H1 (cell line): ENCODE measurements at regions of chr19 and their contacts with region 1.

Region 1: DNA sequence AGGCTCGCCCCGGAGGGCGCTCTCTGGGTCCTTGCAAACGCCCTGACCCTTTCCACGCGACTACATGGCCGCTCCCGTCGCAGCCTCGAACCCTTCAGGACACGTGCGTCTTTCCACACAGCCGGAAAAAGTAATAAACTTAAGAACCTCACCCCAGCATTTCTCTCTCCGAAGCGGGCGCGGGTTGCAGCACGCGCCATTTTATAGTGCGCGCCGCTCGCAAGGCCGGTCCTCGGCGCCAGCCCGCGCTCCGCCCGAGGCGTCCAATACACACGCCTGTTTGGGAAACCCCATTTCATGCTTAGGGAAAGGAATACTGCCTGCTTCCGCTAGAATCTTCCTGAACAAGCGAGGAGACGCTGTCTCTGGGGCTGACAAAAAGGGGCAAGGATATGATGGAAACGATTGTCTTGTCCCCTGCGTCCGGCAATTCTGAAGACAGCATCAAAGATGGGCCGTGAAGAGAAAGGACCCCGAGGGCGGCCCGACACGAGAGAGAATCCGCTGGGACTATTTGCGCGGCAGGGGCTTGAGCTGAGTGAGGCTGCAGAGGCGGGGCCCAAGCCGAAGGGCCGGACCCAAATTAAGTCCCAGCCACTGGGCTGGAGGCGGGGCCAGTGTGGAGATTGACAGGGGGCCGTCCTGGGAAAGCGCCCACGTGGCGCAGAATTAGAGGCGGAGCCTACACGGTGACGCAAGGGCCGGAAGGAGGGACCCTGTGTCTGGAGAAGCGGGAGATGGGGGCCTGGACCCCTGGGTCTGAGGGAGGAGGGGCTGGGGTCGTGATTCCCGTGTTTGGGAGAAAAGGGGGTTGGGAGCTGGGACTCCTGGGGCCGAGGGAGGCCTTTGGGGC is 14.4 kb downstream of the ACP4 start:
- DNase-seq: peak; percentile 96 to 98
- H3K4me3 ChIP-seq: peak overlapping the region; percentile 88 to 99 (median 97)
- H3K27ac ChIP-seq: peak overlapping the region; percentile 100
- H3K4me1 ChIP-seq: peaks cover 0 to 11% (median 5%) of the 10 kb centered on the region in 4 experiments; a peak in 5 of 7 replicates
- H3K27me3 ChIP-seq: peaks cover 0 to 4% (median 3%) of the 10 kb centered on the region in 4 experiments; a peak in 3 of 7 replicates
- CTCF ChIP-seq: no peak
- EP300 ChIP-seq: no peak; a peak in 1 of 3 replicates
- POLR2A ChIP-seq: peak; percentile 98 to 99
- RAD21 ChIP-seq: peak in 1 of 2 experiments; percentile 0; a peak in 1 of 4 replicates

Region 2: GRCh38 chr19:50669302-50670101 is 135.1 kb before region 1 on chr19:
- CTCF ChIA-PET with region 1: no interaction called
- POLR2A ChIA-PET with region 1: no interaction called
- DNase-seq: peak in 1 of 2 experiments; percentile 67
- H3K4me3 ChIP-seq: no peak overlapping the region
- H3K27ac ChIP-seq: no peak overlapping the region
- H3K4me1 ChIP-seq: peaks cover 0 to 8% (median 4%) of the 10 kb centered on the region in 4 experiments; a peak in 5 of 7 replicates
- H3K27me3 ChIP-seq: peaks cover 27 to 46% (median 42%) of the 10 kb centered on the region in 4 experiments
- CTCF ChIP-seq: peak; percentile 58 to 83 (median 68)
- EP300 ChIP-seq: no peak
- POLR2A ChIP-seq: no peak
- RAD21 ChIP-seq: peak; percentile 45 to 49

Region 3: DNA sequence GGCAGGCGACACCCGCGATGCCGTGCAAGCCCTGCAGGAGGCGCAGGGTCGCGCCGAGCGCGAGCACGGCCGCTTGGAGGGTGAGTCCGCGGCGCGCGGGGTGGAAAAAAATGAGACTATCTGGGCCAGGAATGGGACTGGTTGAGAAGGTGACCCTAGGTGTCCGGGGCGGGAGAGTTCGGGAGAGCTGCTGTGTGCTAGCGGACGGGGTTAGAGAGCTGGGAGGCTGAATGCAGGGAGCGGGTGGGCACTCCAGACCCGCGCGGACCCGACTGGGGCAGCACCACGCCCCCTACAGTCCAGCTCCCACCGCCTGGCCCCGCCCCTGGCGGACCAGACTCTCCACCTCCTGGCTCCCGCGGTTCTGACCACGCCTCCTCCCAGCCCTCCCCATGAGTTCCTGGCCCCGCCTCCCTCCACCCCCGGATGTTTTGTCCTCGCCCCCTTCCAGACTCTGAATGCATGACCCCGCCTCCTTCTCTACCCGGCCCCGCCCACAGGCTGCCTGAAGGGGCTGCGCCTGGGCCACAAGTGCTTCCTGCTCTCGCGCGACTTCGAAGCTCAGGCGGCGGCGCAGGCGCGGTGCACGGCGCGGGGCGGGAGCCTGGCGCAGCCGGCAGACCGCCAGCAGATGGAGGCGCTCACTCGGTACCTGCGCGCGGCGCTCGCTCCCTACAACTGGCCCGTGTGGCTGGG is 80.0 kb before region 1 on chr19:
- CTCF ChIA-PET with region 1: interaction called, 8 read pairs
- POLR2A ChIA-PET with region 1: interaction called, 10 read pairs
- DNase-seq: peak; percentile 99
- H3K4me3 ChIP-seq: peak overlapping the region; percentile 68 to 82 (median 74)
- H3K27ac ChIP-seq: peak overlapping the region; percentile 20; the same call in 1 of the 2 replicates
- H3K4me1 ChIP-seq: peaks cover 3 to 39% (median 26%) of the 10 kb centered on the region in 4 experiments
- H3K27me3 ChIP-seq: peaks cover 4 to 39% (median 26%) of the 10 kb centered on the region in 4 experiments
- CTCF ChIP-seq: peak; percentile 63 to 80 (median 75)
- EP300 ChIP-seq: no peak
- POLR2A ChIP-seq: peak in 1 of 2 experiments; percentile 93; a peak in 2 of 3 replicates
- RAD21 ChIP-seq: peak; percentile 47 to 61

Region 4: DNA sequence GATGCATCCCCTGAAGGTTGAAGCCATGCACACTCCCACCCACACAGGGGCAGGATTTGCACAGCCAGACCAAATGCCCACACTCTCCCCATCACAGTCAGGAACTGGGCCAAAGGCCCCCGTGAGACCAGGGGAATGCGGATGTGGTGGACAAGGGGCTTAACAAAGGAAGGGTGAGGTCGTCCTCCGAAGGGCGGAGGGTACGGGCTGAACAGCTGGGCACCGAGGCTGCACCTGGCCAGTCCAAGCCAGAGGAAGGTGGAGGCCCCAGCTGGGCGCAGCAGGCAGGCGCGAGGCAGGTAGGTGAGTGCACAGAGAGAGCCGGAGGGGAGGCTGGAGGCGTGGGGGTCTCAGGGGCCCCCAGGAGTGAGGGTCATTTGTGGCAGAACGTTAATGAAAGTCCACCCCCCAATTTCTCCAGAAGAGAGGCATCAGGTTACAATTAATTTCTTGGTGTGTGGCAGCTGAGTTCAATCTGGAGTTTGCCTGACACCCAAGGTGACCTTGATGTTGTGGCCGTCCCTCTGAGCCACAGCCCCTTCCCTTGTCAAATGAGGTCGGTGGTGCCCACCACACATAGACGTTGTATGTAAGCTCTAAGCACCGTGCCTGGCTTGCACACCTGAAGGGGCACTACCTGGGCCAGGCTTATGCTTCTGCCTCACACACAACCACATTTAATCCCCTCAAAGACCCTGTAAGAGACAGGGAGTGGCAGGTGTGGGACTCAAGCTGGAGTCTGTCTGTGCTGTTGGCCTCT is 25.8 kb after region 1 on chr19:
- CTCF ChIA-PET with region 1: no interaction called
- POLR2A ChIA-PET with region 1: interaction called, 275 read pairs
- DNase-seq: no peak
- H3K4me3 ChIP-seq: no peak overlapping the region
- H3K27ac ChIP-seq: no peak overlapping the region
- H3K4me1 ChIP-seq: no peaks in the 10 kb centered on the region; a peak in 1 of 7 replicates
- H3K27me3 ChIP-seq: peaks cover 0 to 12% (median 3%) of the 10 kb centered on the region in 4 experiments; a peak in 6 of 7 replicates
- CTCF ChIP-seq: no peak
- EP300 ChIP-seq: no peak
- POLR2A ChIP-seq: no peak
- RAD21 ChIP-seq: no peak

Region 5: GRCh38 chr19:50854636-50855410 is 50.2 kb after region 1 on chr19 and contains the start of gene KLK3:
- CTCF ChIA-PET with region 1: no interaction called
- POLR2A ChIA-PET with region 1: interaction called, 31 read pairs
- DNase-seq: no peak
- H3K4me3 ChIP-seq: no peak within 1 kb of the TSS
- H3K27ac ChIP-seq: no peak within 1 kb of the TSS
- H3K4me1 ChIP-seq: peaks cover 0 to 14% (median 6%) of the 10 kb centered on the region in 4 experiments; a peak in 5 of 7 replicates
- H3K27me3 ChIP-seq: 0 out of 7 replicates have a peak, but pooled peaks cover 0 to 3% (median 0%) of the 10 kb centered on the region in 4 experiments
- CTCF ChIP-seq: no peak
- EP300 ChIP-seq: no peak
- POLR2A ChIP-seq: no peak
- RAD21 ChIP-seq: no peak
- total RNA-seq, gene KLK3: not detected in 2 replicates

Region 6: DNA sequence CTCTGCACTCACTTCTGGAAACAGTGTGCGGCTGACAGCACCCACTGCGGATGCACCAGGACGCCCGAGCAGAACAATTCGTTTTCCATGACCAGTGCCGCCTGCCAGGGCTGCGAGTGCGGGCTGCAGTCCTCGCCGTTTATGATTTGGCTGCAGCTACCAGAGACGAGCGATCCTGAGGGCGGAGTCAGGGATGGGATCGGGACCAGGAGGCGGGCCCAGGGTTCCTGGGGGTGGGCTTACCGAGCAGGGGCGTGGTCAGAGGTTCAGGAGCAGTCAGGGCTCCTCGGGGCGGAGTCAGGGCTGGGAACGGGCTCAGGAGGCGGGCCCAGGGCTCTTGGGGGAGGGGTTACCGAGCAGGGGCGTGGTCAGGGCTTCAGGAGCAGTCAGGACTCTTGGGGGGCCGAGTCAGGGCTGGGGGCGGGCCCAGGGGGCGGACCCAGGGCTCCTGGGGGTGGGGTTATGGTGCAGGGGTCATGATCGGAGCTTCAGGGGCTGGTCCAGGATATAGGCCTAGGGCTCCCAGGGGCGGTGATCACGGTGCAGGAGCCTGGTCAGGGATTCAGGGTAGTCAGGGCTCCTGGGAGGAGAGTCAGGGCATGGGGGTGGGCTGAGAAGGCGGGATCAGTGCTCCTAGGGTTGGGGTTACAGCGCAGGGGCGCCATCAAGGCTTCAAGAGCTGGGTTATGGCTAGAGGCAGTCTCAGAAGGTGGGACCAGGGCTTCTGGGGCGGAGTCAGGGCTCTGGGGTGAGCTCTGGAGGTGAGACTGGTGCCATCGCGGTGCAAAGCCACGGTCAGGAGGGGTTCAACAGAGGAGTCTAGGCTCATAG is 104.8 kb after region 1 on chr19:
- CTCF ChIA-PET with region 1: interaction called, 4 read pairs
- POLR2A ChIA-PET with region 1: interaction called, 36 read pairs
- DNase-seq: peak; percentile 95 to 100
- H3K4me3 ChIP-seq: peak overlapping the region; percentile 38 to 68 (median 54)
- H3K27ac ChIP-seq: no peak overlapping the region
- H3K4me1 ChIP-seq: peaks cover 0 to 14% (median 9%) of the 10 kb centered on the region in 4 experiments; a peak in 5 of 7 replicates
- H3K27me3 ChIP-seq: peaks cover 20 to 40% (median 32%) of the 10 kb centered on the region in 4 experiments
- CTCF ChIP-seq: no peak
- EP300 ChIP-seq: no peak
- POLR2A ChIP-seq: no peak
- RAD21 ChIP-seq: no peak